PC-9 (cell line): ENCODE measurements at regions of chr6 and their contacts with region 1.

Region 1: GRCh38 chr6:45930420-45931040 is 85.1 kb downstream of the CLIC5 start:
- DNase-seq: peak in 1 of 2 experiments; percentile 65
- H3K4me3 ChIP-seq: no peak overlapping the region
- H3K27ac ChIP-seq: no peak overlapping the region
- H3K4me1 ChIP-seq: no peaks in the 10 kb centered on the region
- H3K27me3 ChIP-seq: no peaks in the 10 kb centered on the region
- CTCF ChIP-seq: peak; percentile 98

Region 2: GRCh38 chr6:45801471-45802289 is 128.8 kb before region 1 on chr6:
- CTCF ChIA-PET with region 1: no interaction called
- POLR2A ChIA-PET with region 1: no interaction called
- intact Hi-C with region 1: no loop called
- DNase-seq: no peak
- H3K4me3 ChIP-seq: no peak overlapping the region
- H3K27ac ChIP-seq: no peak overlapping the region
- H3K4me1 ChIP-seq: no peaks in the 10 kb centered on the region
- H3K27me3 ChIP-seq: no peaks in the 10 kb centered on the region; the same call in 1 of the 2 replicates
- CTCF ChIP-seq: no peak

Region 3: DNA sequence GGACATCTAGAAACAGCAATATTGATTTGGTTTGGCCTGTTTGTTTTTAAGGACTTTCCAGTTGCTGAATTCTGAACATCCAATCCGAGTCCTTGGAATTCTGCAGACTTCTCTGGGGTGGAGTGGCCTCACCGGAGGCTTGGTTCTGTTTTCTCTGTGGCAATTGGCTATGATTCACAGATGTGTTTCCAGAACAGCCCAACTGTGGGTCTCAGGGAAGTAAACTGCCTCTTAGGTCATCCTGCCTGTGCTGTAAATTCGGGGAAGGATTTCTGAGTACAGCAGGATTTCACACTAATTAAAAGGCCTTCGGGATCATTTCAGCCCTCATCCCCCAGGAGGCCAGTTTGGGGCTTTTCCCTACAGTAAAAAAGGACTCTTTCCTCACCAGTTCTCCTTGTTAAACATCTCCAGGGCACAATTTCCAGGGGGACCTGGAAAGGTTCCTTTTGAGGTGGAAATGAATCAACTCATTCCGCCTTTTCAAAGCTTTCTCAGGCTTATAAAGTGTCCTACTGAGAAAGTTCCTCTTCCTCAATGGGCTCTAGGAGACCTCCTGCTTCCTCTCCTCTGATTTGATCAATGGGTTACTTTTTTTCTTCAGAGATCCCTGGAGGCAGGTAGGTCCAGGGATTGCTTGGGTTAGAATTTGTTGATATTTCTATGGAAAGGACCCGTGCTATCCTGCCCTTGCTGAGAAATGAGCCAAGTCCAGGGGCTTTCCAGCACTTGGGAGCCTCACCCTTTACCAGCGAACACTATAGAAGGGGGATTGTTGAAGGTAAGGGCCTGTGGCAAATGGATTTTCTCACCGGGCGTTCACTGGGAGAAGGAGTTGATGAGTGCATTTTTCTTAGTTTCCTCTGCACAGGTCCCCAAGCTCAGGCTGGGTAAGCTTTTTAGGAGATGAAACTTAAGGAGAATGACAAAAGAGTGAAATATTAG is 29.4 kb before region 1 on chr6:
- CTCF ChIA-PET with region 1: no interaction called
- POLR2A ChIA-PET with region 1: no interaction called
- intact Hi-C with region 1: no loop called
- DNase-seq: no peak
- H3K4me3 ChIP-seq: no peak overlapping the region
- H3K27ac ChIP-seq: no peak overlapping the region
- H3K4me1 ChIP-seq: no peaks in the 10 kb centered on the region
- H3K27me3 ChIP-seq: no peaks in the 10 kb centered on the region
- CTCF ChIP-seq: no peak

Region 4: DNA sequence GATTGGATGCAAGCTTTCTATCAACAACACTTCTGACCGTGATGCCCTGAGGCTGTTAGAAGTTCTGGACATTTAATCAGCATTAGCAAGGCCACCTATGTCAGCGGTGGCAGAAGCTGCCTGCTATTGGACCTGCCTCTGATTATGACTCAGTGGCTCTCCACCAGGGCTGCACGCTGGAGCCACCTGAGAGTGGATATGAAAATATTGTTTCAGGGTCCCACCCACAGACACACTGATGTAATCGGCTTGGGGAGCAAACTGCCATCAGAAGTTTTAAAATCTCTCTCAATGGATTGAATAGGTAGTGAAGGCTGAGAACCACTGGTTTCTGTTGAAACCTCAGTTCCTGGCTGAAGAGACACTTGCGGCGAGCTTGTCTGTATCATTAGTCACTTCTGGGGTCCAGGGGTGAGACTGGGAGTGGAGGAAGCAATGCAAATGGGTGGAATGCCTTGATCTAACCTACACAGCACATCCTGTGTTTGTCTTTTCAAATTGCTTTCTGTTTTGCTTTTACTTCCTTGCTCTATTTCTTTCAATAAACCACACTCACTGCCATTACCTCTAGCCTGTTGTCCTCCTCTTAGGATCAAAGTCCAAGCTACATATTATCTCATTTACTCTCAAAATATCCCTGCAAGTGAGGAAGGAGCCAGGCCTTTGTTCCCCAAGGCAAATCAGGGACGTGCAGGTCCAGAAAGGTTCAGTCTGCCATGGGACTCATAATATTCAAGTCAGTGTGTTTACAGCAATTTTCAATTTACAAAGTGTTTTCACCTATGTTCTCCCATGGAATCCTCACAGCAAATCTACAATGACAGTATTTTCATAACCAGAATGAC is 80.9 kb after region 1 on chr6:
- CTCF ChIA-PET with region 1: no interaction called
- POLR2A ChIA-PET with region 1: no interaction called
- intact Hi-C with region 1: loop called (anchors 5 kb)
- DNase-seq: peak; percentile 52
- H3K4me3 ChIP-seq: no peak overlapping the region
- H3K27ac ChIP-seq: no peak overlapping the region
- H3K4me1 ChIP-seq: 0 out of 2 replicates have a peak, but pooled peaks cover 8% of the 10 kb centered on the region
- H3K27me3 ChIP-seq: peaks cover 31% of the 10 kb centered on the region
- CTCF ChIP-seq: no peak

Region 5: DNA sequence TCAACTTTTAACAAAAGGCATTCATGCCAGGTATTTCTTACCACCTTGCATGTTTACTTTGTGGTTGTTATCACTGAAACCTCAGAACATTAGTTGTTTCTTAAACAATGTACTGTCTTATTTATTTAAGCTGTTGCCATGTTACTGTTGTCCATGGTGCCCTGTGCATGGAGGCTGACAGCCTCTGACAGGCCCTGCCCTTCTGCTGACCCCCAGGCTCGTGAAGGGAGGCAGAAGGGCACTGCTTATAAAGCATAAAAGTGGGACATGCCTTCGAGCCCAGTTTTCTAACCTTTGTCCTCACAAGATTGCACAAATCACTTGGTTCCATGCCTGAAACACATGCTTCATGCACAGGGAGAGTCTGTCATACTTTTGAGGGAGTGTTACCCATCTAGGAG is 131.8 kb after region 1 on chr6:
- CTCF ChIA-PET with region 1: no interaction called
- POLR2A ChIA-PET with region 1: no interaction called
- intact Hi-C with region 1: loop called (anchors 10 kb)
- DNase-seq: peak; percentile 70 to 72
- H3K4me3 ChIP-seq: no peak overlapping the region
- H3K27ac ChIP-seq: no peak overlapping the region
- H3K4me1 ChIP-seq: no peaks in the 10 kb centered on the region
- H3K27me3 ChIP-seq: peaks cover 12% of the 10 kb centered on the region; the same call in 1 of the 2 replicates
- CTCF ChIP-seq: no peak

Region 6: GRCh38 chr6:46090115-46091079 is 159.9 kb after region 1 on chr6:
- CTCF ChIA-PET with region 1: interaction called, 5 read pairs
- POLR2A ChIA-PET with region 1: no interaction called
- intact Hi-C with region 1: loop called (anchors 1 kb)
- DNase-seq: peak; percentile 44 to 47
- H3K4me3 ChIP-seq: no peak overlapping the region
- H3K27ac ChIP-seq: no peak overlapping the region
- H3K4me1 ChIP-seq: no peaks in the 10 kb centered on the region
- H3K27me3 ChIP-seq: no peaks in the 10 kb centered on the region; the same call in 1 of the 2 replicates
- CTCF ChIP-seq: peak; percentile 85

Region 7: GRCh38 chr6:46410334-46410953 is 479.9 kb after region 1 on chr6:
- CTCF ChIA-PET with region 1: interaction called, 5 read pairs
- POLR2A ChIA-PET with region 1: no interaction called
- intact Hi-C with region 1: loop called (anchors 1 kb)
- DNase-seq: peak in 1 of 2 experiments; percentile 23
- H3K4me3 ChIP-seq: no peak overlapping the region
- H3K27ac ChIP-seq: no peak overlapping the region
- H3K4me1 ChIP-seq: no peaks in the 10 kb centered on the region
- H3K27me3 ChIP-seq: no peaks in the 10 kb centered on the region
- CTCF ChIP-seq: peak; percentile 91

Region 8: DNA sequence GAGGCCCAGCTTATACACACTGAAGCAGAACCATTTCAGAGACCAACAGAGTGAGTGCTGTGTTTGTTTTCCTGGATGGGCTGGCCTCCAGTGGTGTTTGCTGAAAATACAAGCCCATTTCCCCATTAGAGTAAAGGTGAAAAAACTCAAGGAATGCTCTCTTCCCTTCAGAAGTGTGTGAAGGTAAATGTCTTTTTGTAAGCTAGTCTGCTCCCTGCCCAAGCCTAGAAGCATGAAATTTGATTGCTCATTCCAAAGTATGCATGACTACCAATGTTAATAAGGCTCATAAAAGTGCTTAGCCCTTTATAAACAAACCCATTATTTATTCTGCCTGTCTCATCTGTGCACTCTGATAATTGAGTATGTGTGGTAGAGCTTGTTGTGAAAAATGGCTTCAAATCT is 1052.5 kb after region 1 on chr6:
- CTCF ChIA-PET with region 1: no interaction called
- POLR2A ChIA-PET with region 1: interaction called, 12 read pairs
- intact Hi-C with region 1: no loop called
- DNase-seq: peak; percentile 14 to 98
- H3K4me3 ChIP-seq: no peak overlapping the region
- H3K27ac ChIP-seq: peak overlapping the region; percentile 70
- H3K4me1 ChIP-seq: peaks cover 61% of the 10 kb centered on the region
- H3K27me3 ChIP-seq: no peaks in the 10 kb centered on the region
- CTCF ChIP-seq: peak; percentile 36; the same call in 1 of the 2 replicates

Region 9: GRCh38 chr6:47047479-47048407 is 1117.2 kb after region 1 on chr6:
- CTCF ChIA-PET with region 1: no interaction called
- POLR2A ChIA-PET with region 1: no interaction called
- intact Hi-C with region 1: loop called (anchors 5 kb)
- DNase-seq: peak; percentile 72 to 99
- H3K4me3 ChIP-seq: no peak overlapping the region; the same call in 1 of the 2 replicates
- H3K27ac ChIP-seq: peak overlapping the region; percentile 98
- H3K4me1 ChIP-seq: peaks cover 60% of the 10 kb centered on the region
- H3K27me3 ChIP-seq: no peaks in the 10 kb centered on the region
- CTCF ChIP-seq: peak; percentile 80